ENCODE measurements at regions of chr19 and their contacts with region 1.

Region 1: GRCh38 chr19:39445265-39446111 is at the start of gene SUPT5H:
- DNase-seq: peak; percentile 99
- H3K4me3 Mint-ChIP-seq: peak within 1 kb of the TSS; percentile 93
- H3K27ac Mint-ChIP-seq: peak within 1 kb of the TSS; percentile 99
- H3K4me1 Mint-ChIP-seq: peaks cover 29% of the 10 kb centered on the region
- H3K27me3 Mint-ChIP-seq: no peaks in the 10 kb centered on the region
- CTCF ChIP-seq: no peak
- total RNA-seq, gene SUPT5H: 122 and 165 TPM in 2 replicates

Region 2: DNA sequence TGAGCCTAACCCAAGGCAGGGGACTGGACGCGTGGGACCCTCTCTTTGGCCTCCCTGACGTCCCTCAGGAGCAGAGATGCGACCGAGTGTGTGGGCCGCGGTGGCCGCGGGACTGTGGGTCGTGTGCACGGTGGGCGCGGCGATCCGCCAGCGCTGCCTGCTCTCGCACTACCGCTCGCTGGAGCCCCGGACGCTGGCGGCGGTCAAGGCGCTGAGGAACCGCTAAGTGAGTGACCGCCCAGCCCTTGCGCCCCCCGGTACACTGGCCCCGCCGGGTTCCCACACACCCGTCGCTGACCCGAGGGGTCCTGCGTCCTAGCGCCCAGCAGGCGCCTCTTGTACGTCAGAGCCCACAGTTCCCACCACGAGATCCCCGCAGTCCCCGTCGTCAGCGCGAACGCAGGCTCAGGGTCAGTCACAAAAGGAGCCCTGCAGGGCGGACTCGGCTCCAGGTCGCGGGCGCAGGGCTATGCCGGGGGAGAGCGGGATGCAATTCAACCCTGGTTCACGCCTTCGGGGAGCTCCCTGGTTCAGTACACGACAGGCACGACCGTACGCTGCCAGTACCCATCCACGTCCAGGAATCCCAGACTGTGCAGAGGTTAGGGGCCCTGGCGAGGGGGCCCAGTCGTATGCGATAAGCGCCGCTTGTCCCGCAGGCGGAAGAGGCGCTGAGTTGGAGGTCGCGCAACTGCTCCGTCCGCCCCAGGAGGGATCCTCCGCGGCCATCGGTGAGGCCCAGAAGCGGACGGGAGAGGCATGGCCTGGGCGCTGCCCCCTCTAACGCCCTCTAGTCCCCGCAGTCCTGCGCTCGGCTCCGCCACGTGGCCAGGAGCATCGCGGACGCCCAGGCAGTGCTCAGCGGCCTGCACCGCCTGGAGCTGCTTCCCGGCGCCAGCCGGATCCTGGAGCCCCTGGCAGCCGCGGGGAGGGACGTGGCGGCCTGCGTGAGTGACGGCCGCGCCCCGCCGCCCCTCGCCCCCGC is 180.9 kb before region 1 on chr19:
- CTCF ChIA-PET with region 1: no interaction called
- POLR2A ChIA-PET with region 1: no interaction called
- intact Hi-C with region 1: no loop called
- DNase-seq: no peak
- H3K4me3 Mint-ChIP-seq: no peak overlapping the region
- H3K27ac Mint-ChIP-seq: no peak overlapping the region
- H3K4me1 Mint-ChIP-seq: no peaks in the 10 kb centered on the region
- H3K27me3 Mint-ChIP-seq: peaks cover 47% of the 10 kb centered on the region
- CTCF ChIP-seq: no peak

Region 3: DNA sequence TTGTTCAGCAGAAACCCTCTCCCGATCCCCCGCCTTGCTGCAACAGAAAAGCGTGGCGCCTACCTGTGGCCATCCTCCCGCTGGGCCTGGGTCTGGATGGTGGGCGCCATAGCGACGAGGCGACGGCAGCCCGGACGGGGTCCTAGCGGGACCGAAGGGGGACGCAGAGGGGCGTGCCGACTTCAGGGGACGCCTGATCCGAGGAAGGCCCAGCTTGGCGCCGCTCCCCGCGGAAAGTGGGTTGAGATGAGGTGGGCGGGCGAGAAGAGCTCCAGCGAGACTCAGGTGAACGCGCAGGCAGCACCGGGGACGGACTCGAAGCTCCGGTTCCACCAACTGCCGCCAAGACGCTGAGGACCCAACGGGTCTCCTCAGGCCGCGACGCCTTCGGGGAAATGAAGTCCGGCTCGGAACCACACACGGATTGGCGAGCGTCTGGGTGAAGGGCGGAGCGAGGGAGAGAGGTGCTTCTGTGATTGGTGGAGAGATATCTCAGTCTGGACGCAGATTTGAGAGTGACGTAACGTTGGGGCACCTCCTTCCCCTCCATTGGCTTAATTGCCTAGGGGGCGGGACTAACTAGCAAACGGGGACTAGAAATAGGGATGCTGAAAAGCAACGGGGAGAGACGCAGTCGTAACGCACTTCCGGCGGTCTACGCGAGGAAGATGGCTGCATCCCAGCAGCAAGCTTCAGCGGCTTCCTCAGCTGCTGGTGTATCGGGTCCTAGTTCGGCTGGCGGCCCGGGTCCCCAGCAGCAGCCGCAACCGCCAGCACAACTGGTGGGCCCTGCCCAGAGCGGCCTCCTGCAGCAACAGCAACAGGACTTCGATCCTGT is 54.5 kb before region 1 on chr19 and contains the starts of genes MED29 and PAF1:
- CTCF ChIA-PET with region 1: no interaction called
- POLR2A ChIA-PET with region 1: interaction called, 10 read pairs
- intact Hi-C with region 1: no loop called
- DNase-seq: peak; percentile 100
- H3K4me3 Mint-ChIP-seq: peak within 1 kb of the TSS; percentile 93
- H3K27ac Mint-ChIP-seq: peak within 1 kb of the TSS; percentile 98
- H3K4me1 Mint-ChIP-seq: peaks cover 12% of the 10 kb centered on the region
- H3K27me3 Mint-ChIP-seq: no peaks in the 10 kb centered on the region
- CTCF ChIP-seq: no peak
- total RNA-seq, gene MED29: 24.3 and 31.7 TPM in 2 replicates
- total RNA-seq, gene PAF1: 47.0 and 48.5 TPM in 2 replicates

Region 4: DNA sequence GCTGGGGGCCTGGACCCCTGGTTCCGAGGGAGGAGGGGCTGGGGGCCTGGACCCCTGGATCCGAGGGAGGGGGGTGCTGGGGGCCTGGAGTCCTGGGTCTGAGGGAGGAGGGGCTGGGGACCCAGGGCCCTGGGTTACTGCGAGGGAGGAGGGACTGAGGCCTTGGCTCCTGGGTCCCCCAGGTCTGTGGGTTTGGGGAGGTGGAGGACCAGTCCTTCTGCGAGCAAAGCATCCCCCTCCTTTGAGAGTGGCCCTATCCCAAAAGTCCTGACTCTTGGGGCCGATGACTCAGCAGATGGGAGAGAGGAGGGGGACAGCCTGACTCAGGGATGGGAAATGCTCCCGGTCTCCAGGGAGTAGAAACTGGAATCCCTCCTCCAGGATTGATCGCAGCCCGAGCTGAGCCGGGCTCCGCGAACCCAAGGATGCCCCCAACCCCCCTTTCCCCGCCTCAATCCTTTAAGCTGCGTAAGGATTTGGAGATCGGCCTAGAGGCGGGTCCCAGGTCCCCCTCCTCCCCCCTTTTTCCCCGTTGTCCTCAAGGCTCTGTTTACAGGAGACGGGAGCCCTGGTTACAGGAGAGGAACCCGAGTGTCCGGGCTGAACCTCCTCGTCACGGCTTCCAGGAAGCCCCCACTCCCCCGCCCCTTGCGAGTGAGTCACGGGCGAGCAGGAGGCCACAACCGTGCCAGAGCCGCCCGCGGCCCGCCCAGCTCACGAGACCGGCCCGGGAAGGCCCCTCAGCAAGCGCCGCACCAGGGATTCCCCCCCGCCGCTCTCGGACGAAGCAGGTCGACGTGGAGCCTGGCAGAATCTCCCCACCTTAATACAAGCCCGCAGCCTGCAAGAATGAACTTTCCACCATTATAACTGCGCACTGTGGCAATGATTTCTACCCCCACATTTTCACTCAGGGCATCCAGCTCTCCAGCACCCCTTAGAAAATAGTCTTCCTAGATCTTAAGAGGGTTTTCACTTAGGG is 41.9 kb before region 1 on chr19:
- CTCF ChIA-PET with region 1: interaction called, 9 read pairs
- POLR2A ChIA-PET with region 1: interaction called, 21 read pairs
- intact Hi-C with region 1: no loop called
- DNase-seq: peak; percentile 99
- H3K4me3 Mint-ChIP-seq: peak overlapping the region; percentile 80
- H3K27ac Mint-ChIP-seq: peak overlapping the region; percentile 100
- H3K4me1 Mint-ChIP-seq: peaks cover 39% of the 10 kb centered on the region
- H3K27me3 Mint-ChIP-seq: no peaks in the 10 kb centered on the region
- CTCF ChIP-seq: no peak

Region 5: DNA sequence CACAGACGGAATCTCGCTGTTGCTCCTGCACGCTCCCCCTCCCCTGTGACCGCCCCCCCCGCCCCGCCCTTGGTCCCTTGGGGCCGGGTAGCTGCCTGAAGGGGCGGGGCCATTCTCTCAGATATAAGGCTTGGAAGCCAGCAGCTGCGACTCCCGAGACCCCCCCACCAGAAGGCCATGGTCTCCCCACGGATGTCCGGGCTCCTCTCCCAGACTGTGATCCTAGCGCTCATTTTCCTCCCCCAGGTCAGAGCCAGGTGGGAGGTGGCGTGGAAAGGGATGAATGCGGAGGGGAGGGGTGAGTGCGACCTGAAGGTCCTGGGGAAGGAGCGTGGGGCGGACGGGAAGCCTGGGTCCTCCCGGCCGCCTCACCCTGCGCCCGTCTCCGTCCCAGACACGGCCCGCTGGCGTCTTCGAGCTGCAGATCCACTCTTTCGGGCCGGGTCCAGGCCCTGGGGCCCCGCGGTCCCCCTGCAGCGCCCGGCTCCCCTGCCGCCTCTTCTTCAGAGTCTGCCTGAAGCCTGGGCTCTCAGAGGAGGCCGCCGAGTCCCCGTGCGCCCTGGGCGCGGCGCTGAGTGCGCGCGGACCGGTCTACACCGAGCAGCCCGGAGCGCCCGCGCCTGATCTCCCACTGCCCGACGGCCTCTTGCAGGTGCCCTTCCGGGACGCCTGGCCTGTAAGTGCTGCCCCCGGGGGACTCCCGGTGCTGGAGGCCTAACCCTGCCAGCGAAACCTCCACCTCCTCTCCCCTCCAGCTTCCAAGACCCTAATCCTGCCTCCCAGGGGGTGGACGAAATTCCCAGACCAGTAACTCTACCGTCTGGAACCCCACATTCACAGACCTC is 53.5 kb after region 1 on chr19 and contains the start of gene DLL3:
- CTCF ChIA-PET with region 1: interaction called, 11 read pairs
- POLR2A ChIA-PET with region 1: interaction called, 4 read pairs
- intact Hi-C with region 1: no loop called
- DNase-seq: no peak
- H3K4me3 Mint-ChIP-seq: peak within 1 kb of the TSS; percentile 6
- H3K27ac Mint-ChIP-seq: no peak within 1 kb of the TSS
- H3K4me1 Mint-ChIP-seq: peaks cover 7% of the 10 kb centered on the region
- H3K27me3 Mint-ChIP-seq: peaks cover 33% of the 10 kb centered on the region
- CTCF ChIP-seq: no peak
- total RNA-seq, gene DLL3: 0.56 and 0.68 TPM in 2 replicates

Region 6: GRCh38 chr19:39539519-39540332 is 94.2 kb after region 1 on chr19 and contains the start of gene EID2:
- CTCF ChIA-PET with region 1: interaction called, 51 read pairs
- POLR2A ChIA-PET with region 1: interaction called, 21 read pairs
- intact Hi-C with region 1: loop called (anchors 2 kb)
- DNase-seq: peak; percentile 93
- H3K4me3 Mint-ChIP-seq: peak within 1 kb of the TSS; percentile 79
- H3K27ac Mint-ChIP-seq: no peak within 1 kb of the TSS
- H3K4me1 Mint-ChIP-seq: peaks cover 14% of the 10 kb centered on the region
- H3K27me3 Mint-ChIP-seq: no peaks in the 10 kb centered on the region
- CTCF ChIP-seq: peak; percentile 68
- total RNA-seq, gene EID2: 8.5 and 10.4 TPM in 2 replicates

Measured in MCF 10A (cell line).